ENCODE measurements at regions of chr1 and their contacts with region 1.

Region 1: GRCh38 chr1:1019122-1019999 is 559 bp upstream of the AGRN start:
- DNase-seq: peak in 1 of 2 donors; percentile 87
- H3K4me3 ChIP-seq: peak overlapping the region; percentile 93 to 95
- H3K27ac ChIP-seq: peak overlapping the region; percentile 87 to 93
- H3K4me1 ChIP-seq: peaks cover 10% of the 10 kb centered on the region in 2 donors
- H3K27me3 ChIP-seq: no peaks in the 10 kb centered on the region
- CTCF ChIP-seq: peak; percentile 28 to 54 (median 48)

Region 2: DNA sequence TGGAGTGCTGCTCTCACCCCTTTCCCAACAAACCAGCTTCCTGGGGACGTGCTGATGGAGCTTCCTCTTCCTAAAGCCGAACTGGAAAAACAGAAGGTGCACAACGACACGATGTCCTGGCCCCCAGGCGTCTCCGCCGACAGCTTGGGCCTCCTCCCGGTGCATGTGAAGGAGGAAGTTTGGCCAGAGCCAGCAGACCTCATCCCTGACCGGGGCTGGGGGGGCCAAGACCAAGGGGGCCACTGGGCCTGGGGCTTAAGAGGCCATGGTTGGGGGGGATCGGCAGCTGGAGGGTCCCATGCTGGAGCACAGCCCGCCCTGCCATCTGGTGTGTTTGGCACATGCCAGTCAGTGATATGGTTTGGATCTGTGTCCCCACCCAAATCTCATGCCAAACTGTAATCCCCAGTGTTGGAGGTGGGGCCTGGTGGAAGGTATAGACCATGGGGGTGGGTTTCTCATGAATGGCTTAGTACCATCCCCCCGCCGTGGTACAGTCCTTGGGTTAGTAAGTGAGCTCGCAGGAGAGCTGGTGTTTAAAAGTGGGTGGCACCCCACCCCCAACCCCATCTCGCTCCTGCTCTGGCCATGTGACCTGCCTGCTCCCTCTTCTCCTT is 25.9 kb before region 1 on chr1:
- intact Hi-C with region 1: no loop called
- DNase-seq: no peak
- H3K4me3 ChIP-seq: no peak overlapping the region
- H3K27ac ChIP-seq: no peak overlapping the region
- H3K4me1 ChIP-seq: peaks cover 4 to 8% of the 10 kb centered on the region in 2 donors
- H3K27me3 ChIP-seq: no peaks in the 10 kb centered on the region
- CTCF ChIP-seq: no peak

Region 3: GRCh38 chr1:1040004-1040991 is 20.9 kb after region 1 on chr1:
- intact Hi-C with region 1: loop called (anchors 1 kb)
- DNase-seq: peak in 1 of 2 donors; percentile 76
- H3K4me3 ChIP-seq: peak overlapping the region; percentile 46 to 74
- H3K27ac ChIP-seq: no peak overlapping the region
- H3K4me1 ChIP-seq: peaks cover 8 to 10% of the 10 kb centered on the region in 2 donors
- H3K27me3 ChIP-seq: no peaks in the 10 kb centered on the region
- CTCF ChIP-seq: peak in 1 of 3 experiments; percentile 27

Measured in ascending aorta (tissue), 2 donors.